ENCODE measurements at regions of chr10 and their contacts with region 1.

Region 1: DNA sequence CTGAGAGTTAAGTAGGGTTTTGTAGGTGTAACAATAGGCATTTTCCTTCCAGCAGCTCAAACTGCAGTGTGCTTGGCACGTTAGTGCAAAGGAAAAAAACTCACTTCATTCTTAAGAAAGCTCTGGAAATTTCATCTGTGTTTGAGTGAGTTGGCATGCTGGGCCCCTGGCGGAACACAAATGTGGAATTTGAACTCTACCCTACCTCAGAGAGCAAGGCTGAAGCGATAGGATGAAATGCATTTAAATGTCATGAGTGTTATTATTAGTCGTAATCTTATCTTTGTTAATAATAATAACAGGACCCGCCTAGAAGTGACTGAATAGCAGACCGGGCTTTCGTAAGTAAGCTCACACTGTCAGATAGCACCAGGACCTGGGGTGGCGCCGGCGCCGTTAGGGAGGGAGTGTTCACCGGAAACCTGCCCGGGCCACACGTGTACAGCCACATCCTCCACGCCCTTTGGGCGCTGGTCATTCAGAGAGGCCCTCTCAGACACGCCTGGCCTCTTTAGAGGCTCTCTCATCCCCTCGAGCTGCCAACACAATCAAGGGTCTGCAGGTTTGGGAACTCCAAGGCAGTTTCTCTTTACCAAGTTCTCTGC is 63.5 kb downstream of the GRK5 start:
- DNase-seq: peak; percentile 64
- H3K4me3 Mint-ChIP-seq: peak overlapping the region; percentile 24
- H3K27ac Mint-ChIP-seq: peak overlapping the region; percentile 91
- H3K4me1 Mint-ChIP-seq: peaks cover 58% of the 10 kb centered on the region
- H3K27me3 Mint-ChIP-seq: no peaks in the 10 kb centered on the region

Region 2: GRCh38 chr10:119281581-119282071 is 10.8 kb after region 1 on chr10:
- CTCF ChIA-PET with region 1: interaction called, 26 read pairs
- POLR2A ChIA-PET with region 1: interaction called, 69 read pairs
- DNase-seq: no peak
- H3K4me3 Mint-ChIP-seq: no peak overlapping the region
- H3K27ac Mint-ChIP-seq: no peak overlapping the region
- H3K4me1 Mint-ChIP-seq: peaks cover 52% of the 10 kb centered on the region
- H3K27me3 Mint-ChIP-seq: no peaks in the 10 kb centered on the region